Endothelial cell of umbilical vein (primary cell): ENCODE measurements at regions of chr7 and their contacts with region 1.

Region 1: DNA sequence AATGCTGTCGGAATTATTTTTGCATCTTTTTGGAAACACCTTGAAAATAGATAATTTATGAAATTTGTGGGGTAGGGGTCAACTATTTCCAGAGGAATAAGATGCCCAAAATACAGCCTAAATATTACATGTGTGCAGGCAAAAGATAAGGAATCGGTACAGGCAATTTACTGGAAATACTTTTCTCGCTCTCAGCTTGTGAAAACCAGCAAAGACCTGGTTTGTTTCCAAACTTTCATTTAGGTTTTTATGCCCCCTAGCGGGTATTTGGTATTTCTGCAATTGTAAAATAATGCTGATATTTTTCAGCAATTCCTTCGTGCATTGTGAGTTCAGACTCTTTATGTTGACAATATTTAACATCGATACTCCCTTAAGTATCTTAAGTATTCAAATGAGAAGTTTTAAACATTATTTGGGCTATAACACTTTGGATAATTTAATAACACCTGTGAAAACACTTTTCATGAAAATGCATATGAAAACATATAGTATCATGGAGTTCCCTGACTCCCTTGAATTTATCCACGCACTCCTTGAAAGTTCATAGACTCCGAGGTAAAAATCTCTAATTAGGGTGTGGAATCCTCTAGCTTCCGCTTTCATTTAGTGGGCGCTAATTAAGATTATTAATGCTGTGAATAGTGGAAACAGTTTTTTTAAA is 132.4 kb downstream of the TSPAN12 start:
- DNase-seq: peak; percentile 48
- H3K4me3 ChIP-seq: no peak overlapping the region
- H3K27ac ChIP-seq: no peak overlapping the region
- H3K4me1 ChIP-seq: peaks cover 2% of the 10 kb centered on the region
- H3K27me3 ChIP-seq: peaks cover 2 to 3% of the 10 kb centered on the region in 2 experiments
- CTCF ChIP-seq: peak; percentile 37 to 39
- POLR2A ChIP-seq: no peak

Region 2: GRCh38 chr7:119270045-119270464 is 1455.5 kb before region 1 on chr7:
- CTCF ChIA-PET with region 1: interaction called, 5 read pairs
- POLR2A ChIA-PET with region 1: no interaction called
- dilution Hi-C with region 1: no loop called
- intact Hi-C with region 1: loop called (anchors 2 kb)
- DNase-seq: peak; percentile 49
- H3K4me3 ChIP-seq: no peak overlapping the region
- H3K27ac ChIP-seq: no peak overlapping the region
- H3K4me1 ChIP-seq: no peaks in the 10 kb centered on the region
- H3K27me3 ChIP-seq: no peaks in the 10 kb centered on the region
- CTCF ChIP-seq: peak; percentile 78 to 83
- POLR2A ChIP-seq: no peak

Region 3: GRCh38 chr7:120272261-120272660 is 453.2 kb before region 1 on chr7:
- CTCF ChIA-PET with region 1: interaction called, 5 read pairs
- POLR2A ChIA-PET with region 1: no interaction called
- dilution Hi-C with region 1: no loop called
- intact Hi-C with region 1: loop called (anchors 10 kb)
- DNase-seq: peak; percentile 49
- H3K4me3 ChIP-seq: peak overlapping the region; percentile 33 to 82 (median 59)
- H3K27ac ChIP-seq: no peak overlapping the region
- H3K4me1 ChIP-seq: peaks cover 11% of the 10 kb centered on the region
- H3K27me3 ChIP-seq: peaks cover 14 to 19% of the 10 kb centered on the region in 2 experiments
- CTCF ChIP-seq: peak; percentile 66 to 71
- POLR2A ChIP-seq: no peak

Region 4: DNA sequence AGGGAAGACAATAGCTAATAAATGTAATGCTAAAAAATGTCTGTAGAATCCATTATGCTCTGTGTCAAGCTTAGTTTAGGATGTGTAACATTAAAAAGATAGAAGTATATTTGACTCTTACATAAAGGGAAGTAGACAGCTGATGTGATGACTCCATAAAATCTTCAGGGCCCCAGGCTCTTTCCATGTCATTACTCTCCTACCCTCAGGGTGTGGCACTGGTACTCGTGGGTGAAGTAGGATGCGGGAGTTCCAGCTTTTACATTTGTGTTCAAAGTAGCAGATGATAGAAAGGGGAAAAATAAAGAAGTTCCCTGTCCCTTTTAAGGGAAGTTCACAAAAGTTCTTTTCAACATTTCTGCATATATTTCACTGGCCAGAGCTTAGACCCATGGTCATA is 24.7 kb before region 1 on chr7:
- CTCF ChIA-PET with region 1: interaction called, 13 read pairs
- POLR2A ChIA-PET with region 1: no interaction called
- dilution Hi-C with region 1: no loop called
- intact Hi-C with region 1: no loop called
- DNase-seq: no peak
- H3K4me3 ChIP-seq: no peak overlapping the region
- H3K27ac ChIP-seq: no peak overlapping the region
- H3K4me1 ChIP-seq: no peaks in the 10 kb centered on the region
- H3K27me3 ChIP-seq: no peaks in the 10 kb centered on the region
- CTCF ChIP-seq: no peak
- POLR2A ChIP-seq: no peak

Region 5: DNA sequence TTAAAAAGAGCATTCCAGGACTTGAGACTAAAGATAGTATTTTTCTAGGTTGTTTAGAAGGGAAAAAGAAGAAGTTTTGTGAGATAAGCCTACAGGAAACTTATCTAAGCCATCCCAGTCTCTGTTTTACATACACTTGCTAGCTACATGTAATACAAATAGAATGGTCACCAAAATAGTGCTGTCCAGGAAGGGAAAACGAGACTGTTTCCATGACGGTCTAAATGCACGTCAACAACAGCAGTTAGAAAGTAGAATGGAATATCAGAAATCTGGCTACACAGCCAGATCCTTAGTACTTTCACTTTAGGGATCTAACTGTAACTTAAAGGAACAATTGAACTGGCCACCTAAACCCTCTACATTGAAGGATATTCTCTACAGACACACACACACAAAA is 14.8 kb after region 1 on chr7:
- CTCF ChIA-PET with region 1: interaction called, 11 read pairs
- POLR2A ChIA-PET with region 1: no interaction called
- dilution Hi-C with region 1: no loop called
- intact Hi-C with region 1: no loop called
- DNase-seq: peak; percentile 70
- H3K4me3 ChIP-seq: no peak overlapping the region
- H3K27ac ChIP-seq: no peak overlapping the region
- H3K4me1 ChIP-seq: no peaks in the 10 kb centered on the region
- H3K27me3 ChIP-seq: no peaks in the 10 kb centered on the region
- CTCF ChIP-seq: no peak
- POLR2A ChIP-seq: no peak

Region 6: DNA sequence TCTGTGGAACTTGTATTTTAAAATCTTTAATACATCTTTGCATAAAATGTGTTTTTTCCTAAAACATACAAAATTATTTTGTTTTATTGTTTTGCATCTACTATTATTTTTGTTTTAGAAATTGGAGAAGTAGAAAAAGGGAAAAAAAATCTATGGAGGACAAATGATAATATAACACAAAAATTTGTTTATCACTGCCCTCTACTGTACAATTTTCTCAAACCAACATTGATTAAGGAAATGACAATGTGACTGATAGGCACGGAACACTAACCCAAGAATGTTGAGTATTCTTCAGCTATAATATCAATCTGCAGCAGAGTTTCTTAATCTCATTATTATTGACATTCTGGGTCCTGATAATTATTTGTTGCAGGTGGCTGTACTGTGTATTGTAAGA is 215.6 kb after region 1 on chr7:
- CTCF ChIA-PET with region 1: interaction called, 4 read pairs
- POLR2A ChIA-PET with region 1: no interaction called
- dilution Hi-C with region 1: no loop called
- intact Hi-C with region 1: loop called (anchors 2 kb)
- DNase-seq: peak; percentile 75
- H3K4me3 ChIP-seq: no peak overlapping the region
- H3K27ac ChIP-seq: peak overlapping the region; percentile 87
- H3K4me1 ChIP-seq: peaks cover 46% of the 10 kb centered on the region
- H3K27me3 ChIP-seq: no peaks in the 10 kb centered on the region
- CTCF ChIP-seq: peak in 1 of 2 donors; percentile 26
- POLR2A ChIP-seq: no peak

Region 7: DNA sequence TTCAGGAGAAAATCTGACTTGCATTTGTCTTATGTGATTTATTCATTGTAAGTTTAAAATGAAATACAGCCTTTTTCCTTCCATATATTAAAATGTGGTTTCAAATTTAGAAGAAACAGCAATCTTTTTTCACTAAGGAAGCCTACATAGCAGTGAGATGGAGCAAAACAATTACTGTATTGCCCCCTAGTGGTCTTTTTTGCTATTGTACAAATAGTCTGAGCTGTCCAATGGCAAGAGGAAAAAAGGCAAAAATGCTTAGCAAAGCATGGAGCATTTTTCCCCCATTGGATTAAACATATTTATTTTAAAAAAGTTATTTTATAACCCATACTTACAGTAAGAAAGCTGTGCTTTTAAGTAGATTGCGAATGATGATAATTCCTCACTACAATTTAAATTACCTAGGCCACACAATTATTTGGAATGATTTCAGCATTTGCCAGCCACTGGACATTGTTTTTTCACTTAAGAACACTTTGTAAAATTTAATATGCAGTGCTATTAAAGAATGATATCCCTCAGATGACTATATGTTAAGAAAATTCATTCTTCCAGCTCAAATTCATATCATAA is 382.5 kb after region 1 on chr7:
- CTCF ChIA-PET with region 1: interaction called, 10 read pairs
- POLR2A ChIA-PET with region 1: no interaction called
- dilution Hi-C with region 1: no loop called
- intact Hi-C with region 1: loop called (anchors 5 kb)
- DNase-seq: peak; percentile 78
- H3K4me3 ChIP-seq: no peak overlapping the region
- H3K27ac ChIP-seq: no peak overlapping the region
- H3K4me1 ChIP-seq: no peaks in the 10 kb centered on the region
- H3K27me3 ChIP-seq: peaks cover 12 to 16% of the 10 kb centered on the region in 2 experiments
- CTCF ChIP-seq: peak; percentile 57 to 59
- POLR2A ChIP-seq: no peak